ENCODE measurements at regions of chr5 and their contacts with region 1.

Region 1: DNA sequence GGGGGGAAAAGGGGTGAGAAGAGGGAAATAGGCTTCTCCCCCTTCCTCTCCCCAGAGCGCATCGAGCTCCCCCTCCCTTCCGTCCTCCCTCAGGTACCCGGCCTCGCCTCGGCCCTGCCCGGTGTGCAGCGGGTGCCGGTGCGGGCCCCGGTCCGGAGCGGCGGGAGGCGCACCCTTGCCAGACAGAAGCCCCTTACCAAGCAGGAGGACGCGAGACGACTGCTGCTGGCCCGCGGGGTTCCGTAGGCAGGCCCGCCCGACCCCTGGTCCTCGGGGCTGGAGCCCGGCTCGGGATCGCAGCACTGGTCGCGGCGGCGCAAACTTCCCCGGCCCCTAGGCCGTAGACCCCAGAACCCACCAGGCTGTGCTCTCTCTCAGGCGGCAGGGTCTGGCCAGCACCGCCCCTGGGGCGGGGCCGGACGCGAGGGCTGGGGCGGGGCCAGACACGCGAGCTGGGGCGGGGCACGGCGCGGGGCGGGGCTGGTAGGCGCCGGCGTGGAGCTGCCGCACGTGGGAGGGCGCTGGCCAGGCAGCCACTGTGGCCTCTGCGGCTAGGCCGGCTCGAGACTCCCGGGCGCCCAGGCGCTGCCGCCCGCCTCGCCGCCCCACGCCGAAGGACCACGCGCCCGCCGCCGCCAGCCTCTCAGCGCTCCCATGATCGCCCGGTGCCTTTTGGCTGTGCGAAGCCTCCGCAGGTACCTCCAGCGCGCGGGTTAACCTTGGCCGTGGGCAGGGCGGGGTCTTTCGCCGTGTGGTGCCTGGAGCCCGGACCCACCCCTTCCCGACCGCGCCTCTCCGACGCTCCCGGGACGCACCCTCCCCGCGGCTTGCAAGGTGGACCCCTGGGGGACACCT is at the starts of genes NLN and SGTB:
- DNase-seq: peak; percentile 87
- H3K4me3 Mint-ChIP-seq: peak within 1 kb of the TSS; percentile 81
- H3K27ac Mint-ChIP-seq: peak within 1 kb of the TSS; percentile 77
- H3K4me1 Mint-ChIP-seq: peaks cover 40% of the 10 kb centered on the region
- H3K27me3 Mint-ChIP-seq: no peaks in the 10 kb centered on the region
- total RNA-seq, gene NLN: 7.6 to 8.0 TPM
- total RNA-seq, gene SGTB: 19.7 to 23.0 TPM

Region 2: DNA sequence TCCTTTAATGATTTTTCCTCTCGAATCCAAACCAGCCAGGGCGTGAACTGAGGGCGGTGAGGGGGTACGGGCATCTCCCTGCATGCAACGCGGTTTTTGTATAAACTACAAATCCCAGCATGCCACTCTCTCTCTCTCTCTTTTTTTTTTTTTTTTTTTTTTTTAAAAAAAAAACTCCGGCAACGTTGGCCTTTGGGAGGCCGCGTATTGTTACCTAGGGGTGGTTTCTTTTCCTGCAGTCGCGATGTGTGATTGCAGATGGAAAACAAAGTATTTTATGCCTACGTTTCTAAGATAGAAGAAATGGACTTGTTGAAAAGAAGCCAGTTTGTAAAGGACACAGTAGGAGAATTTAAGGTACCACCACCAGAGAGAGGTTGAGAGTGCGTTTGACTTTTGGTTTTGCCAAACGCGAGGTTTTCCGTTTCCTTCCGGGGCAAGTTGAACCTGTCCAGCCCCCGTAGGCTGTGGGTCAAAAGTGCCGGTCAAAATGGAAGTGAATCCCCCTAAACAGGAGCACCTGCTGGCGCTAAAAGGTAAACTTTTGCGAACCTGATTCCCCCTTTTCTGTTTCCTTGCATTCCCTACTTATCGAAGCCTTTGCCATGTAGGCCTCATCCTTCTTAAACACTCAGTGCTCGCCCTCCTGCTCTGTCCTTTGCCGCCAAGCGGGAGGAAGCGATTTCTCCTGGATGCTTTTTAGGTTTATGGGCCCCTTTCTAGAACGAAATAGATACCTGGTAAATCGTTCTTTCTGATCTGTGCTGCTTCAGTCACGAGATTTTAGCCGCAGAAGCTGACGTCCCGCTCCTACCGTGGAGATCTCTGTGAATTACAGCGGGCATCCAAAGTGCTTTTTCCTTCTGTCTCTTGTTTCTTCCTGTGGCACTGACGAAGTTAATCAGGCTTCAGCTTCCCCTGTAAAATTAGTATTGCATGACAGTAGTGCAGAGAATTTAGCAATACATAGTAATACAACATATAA is 97.1 kb before region 1 on chr5 and contains the starts of genes SHLD3 and TRAPPC13:
- CTCF ChIA-PET with region 1: interaction called, 5 read pairs
- POLR2A ChIA-PET with region 1: interaction called, 27 read pairs
- DNase-seq: peak; percentile 86
- H3K4me3 Mint-ChIP-seq: peak within 1 kb of the TSS; percentile 92
- H3K27ac Mint-ChIP-seq: peak within 1 kb of the TSS; percentile 94
- H3K4me1 Mint-ChIP-seq: peaks cover 44% of the 10 kb centered on the region
- H3K27me3 Mint-ChIP-seq: no peaks in the 10 kb centered on the region
- total RNA-seq, gene SHLD3: 3.6 to 4.3 TPM
- total RNA-seq, gene TRAPPC13: 21.2 to 23.3 TPM

Region 3: GRCh38 chr5:65925601-65926275 is 203.8 kb after region 1 on chr5:
- CTCF ChIA-PET with region 1: no interaction called
- POLR2A ChIA-PET with region 1: interaction called, 39 read pairs
- DNase-seq: peak; percentile 79
- H3K4me3 Mint-ChIP-seq: peak overlapping the region; percentile 86
- H3K27ac Mint-ChIP-seq: peak overlapping the region; percentile 93
- H3K4me1 Mint-ChIP-seq: peaks cover 24% of the 10 kb centered on the region
- H3K27me3 Mint-ChIP-seq: peaks cover 11% of the 10 kb centered on the region

Region 4: GRCh38 chr5:66144074-66144833 is 422.3 kb after region 1 on chr5 and contains the start of gene SREK1:
- CTCF ChIA-PET with region 1: no interaction called
- POLR2A ChIA-PET with region 1: interaction called, 26 read pairs
- DNase-seq: peak; percentile 88
- H3K4me3 Mint-ChIP-seq: peak within 1 kb of the TSS; percentile 97
- H3K27ac Mint-ChIP-seq: peak within 1 kb of the TSS; percentile 99
- H3K4me1 Mint-ChIP-seq: peaks cover 31% of the 10 kb centered on the region
- H3K27me3 Mint-ChIP-seq: no peaks in the 10 kb centered on the region
- total RNA-seq, gene SREK1: 52.3 to 53.4 TPM